PC-9 (cell line): ENCODE measurements at regions of chr2 and their contacts with region 1.

Region 1: DNA sequence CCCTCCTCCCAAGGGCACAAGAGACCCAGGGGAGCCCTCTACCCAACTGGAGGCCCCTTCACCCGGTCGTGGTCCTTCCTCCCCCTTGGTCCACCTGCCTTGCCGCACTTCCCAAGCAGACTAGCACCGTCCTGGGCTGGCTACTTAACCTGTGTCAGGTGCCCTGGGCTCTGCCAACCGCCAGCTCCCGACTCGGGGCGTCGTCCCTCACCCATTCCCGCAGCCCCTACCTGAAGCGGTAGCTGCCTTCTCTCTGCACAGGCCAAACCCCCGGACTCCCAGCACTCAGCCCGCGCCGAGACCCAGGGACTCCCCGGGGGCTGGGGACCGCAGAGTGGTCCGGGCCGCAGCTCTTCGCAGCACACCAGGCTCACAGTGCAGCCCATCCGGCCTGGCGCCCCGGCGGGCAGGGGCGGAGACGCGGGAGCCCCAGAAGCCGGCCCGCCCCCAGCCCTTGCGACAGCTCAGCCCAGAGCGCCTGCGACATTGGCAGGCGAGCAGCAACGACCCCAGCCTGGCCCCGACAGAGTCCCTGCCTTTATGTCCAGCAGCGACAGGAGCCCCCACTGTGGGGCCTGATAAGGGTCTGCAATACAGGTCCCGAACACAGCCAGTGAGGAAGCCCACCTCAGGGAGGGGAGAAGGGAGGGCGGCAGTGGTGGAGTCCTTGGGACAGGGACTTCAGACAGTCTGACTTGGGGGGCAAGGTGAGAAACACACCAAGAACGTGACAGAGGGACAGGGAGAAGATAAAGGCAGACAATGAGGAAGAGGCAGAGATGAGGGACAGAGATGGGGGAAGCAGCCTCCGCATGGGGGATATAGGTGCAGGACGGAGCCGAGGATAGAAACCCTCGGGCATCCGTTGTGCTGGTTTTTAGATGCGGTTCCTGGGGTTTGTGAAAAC is 31.0 kb upstream of the TNS1 start:
- DNase-seq: no peak
- H3K4me3 ChIP-seq: no peak overlapping the region
- H3K27ac ChIP-seq: no peak overlapping the region
- H3K4me1 ChIP-seq: no peaks in the 10 kb centered on the region
- H3K27me3 ChIP-seq: peaks cover 37% of the 10 kb centered on the region
- CTCF ChIP-seq: no peak

Region 2: GRCh38 chr2:217886720-217887309 is 147.0 kb before region 1 on chr2:
- CTCF ChIA-PET with region 1: no interaction called
- POLR2A ChIA-PET with region 1: no interaction called
- intact Hi-C with region 1: loop called (anchors 5 kb)
- DNase-seq: peak; percentile 29 to 60
- H3K4me3 ChIP-seq: no peak overlapping the region
- H3K27ac ChIP-seq: no peak overlapping the region
- H3K4me1 ChIP-seq: no peaks in the 10 kb centered on the region
- H3K27me3 ChIP-seq: no peaks in the 10 kb centered on the region
- CTCF ChIP-seq: peak; percentile 89

Region 3: GRCh38 chr2:218063486-218063885 is 29.6 kb after region 1 on chr2:
- CTCF ChIA-PET with region 1: no interaction called
- POLR2A ChIA-PET with region 1: no interaction called
- intact Hi-C with region 1: loop called (anchors 5 kb)
- DNase-seq: no peak
- H3K4me3 ChIP-seq: no peak overlapping the region
- H3K27ac ChIP-seq: no peak overlapping the region
- H3K4me1 ChIP-seq: no peaks in the 10 kb centered on the region
- H3K27me3 ChIP-seq: peaks cover 27% of the 10 kb centered on the region
- CTCF ChIP-seq: no peak